ENCODE measurements at regions of chr2 and their contacts with region 1.

Region 1: DNA sequence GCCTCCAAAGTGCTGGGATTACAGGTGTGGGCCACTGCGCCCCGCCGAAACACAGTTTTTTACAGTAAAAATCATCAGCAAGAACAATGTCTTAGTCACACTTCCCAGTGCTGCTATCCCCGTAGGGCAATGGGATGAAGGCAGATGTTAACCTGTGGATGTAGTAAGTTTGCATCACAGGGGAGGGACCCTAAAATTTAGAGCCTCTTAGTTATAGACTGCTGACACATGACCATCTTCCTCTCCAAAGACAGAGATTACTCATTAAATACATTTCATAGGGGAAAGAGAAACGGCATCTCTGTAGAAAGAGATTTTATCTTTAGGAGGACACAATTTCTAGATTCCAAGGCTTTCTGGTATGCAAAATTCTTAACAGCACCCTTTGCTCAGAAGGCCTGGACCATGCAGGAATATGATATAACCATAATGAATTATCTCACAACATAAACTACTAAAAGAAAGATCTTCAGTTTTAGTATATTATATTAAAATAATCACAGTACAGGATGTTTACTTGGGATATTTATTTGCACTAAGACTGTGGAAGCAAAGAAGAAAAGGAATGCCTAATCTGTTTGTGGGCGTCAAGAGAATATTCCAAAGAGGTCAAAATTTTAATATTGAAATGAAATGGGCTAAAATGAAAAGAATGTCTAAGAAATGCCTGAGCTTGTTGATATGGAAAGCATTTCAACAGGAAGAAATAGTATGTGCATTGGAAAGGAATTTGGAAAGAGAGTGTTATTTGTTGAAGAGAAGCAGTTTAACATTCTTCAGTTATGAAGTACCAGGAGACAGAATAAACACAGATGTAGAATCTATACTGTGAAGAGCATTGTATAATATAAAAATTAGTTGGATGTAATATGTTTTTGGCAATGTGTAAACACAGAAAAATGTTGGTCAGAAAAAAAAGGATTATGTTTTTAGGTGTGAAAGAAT is 1228.3 kb upstream of the CHAC2 start:
- DNase-seq: peak; percentile 86
- ATAC-seq: peak; percentile 88
- H3K4me3 ChIP-seq: no peak overlapping the region
- H3K27ac ChIP-seq: peak overlapping the region; percentile 98
- H3K4me1 ChIP-seq: peaks cover 12% of the 10 kb centered on the region
- H3K27me3 ChIP-seq: no peaks in the 10 kb centered on the region
- CTCF ChIP-seq: no peak
- POLR2A ChIP-seq: no peak
- RAD21 ChIP-seq: no peak

Region 2: GRCh38 chr2:51734115-51734514 is 805.2 kb before region 1 on chr2:
- CTCF ChIA-PET with region 1: no interaction called
- POLR2A ChIA-PET with region 1: no interaction called
- dilution Hi-C with region 1: no loop called
- in situ Hi-C with region 1: no loop called
- intact Hi-C with region 1: no loop called
- DNase-seq: peak; percentile 71
- ATAC-seq: peak; percentile 60
- H3K4me3 ChIP-seq: no peak overlapping the region
- H3K27ac ChIP-seq: no peak overlapping the region
- H3K4me1 ChIP-seq: no peaks in the 10 kb centered on the region
- H3K27me3 ChIP-seq: no peaks in the 10 kb centered on the region
- CTCF ChIP-seq: no peak
- POLR2A ChIP-seq: no peak
- RAD21 ChIP-seq: no peak

Region 3: GRCh38 chr2:51995293-51995692 is 544.0 kb before region 1 on chr2:
- CTCF ChIA-PET with region 1: no interaction called
- POLR2A ChIA-PET with region 1: no interaction called
- dilution Hi-C with region 1: no loop called
- in situ Hi-C with region 1: no loop called
- intact Hi-C with region 1: loop called (anchors 5 kb)
- DNase-seq: peak; percentile 89
- ATAC-seq: peak; percentile 75
- H3K4me3 ChIP-seq: no peak overlapping the region
- H3K27ac ChIP-seq: peak overlapping the region; percentile 63; the same call in 1 of the 2 replicates
- H3K4me1 ChIP-seq: peaks cover 6% of the 10 kb centered on the region
- H3K27me3 ChIP-seq: no peaks in the 10 kb centered on the region
- CTCF ChIP-seq: no peak
- POLR2A ChIP-seq: no peak
- RAD21 ChIP-seq: no peak; the same call in 1 of the 2 replicates

Region 4: GRCh38 chr2:52429740-52430139 is 109.6 kb before region 1 on chr2:
- CTCF ChIA-PET with region 1: no interaction called
- POLR2A ChIA-PET with region 1: no interaction called
- dilution Hi-C with region 1: no loop called
- in situ Hi-C with region 1: no loop called
- intact Hi-C with region 1: loop called (anchors 10 kb)
- DNase-seq: peak; percentile 62
- ATAC-seq: peak; percentile 82
- H3K4me3 ChIP-seq: no peak overlapping the region
- H3K27ac ChIP-seq: peak overlapping the region; percentile 52; the same call in 1 of the 2 replicates
- H3K4me1 ChIP-seq: 0 out of 2 replicates have a peak, but pooled peaks cover 1% of the 10 kb centered on the region
- H3K27me3 ChIP-seq: no peaks in the 10 kb centered on the region
- CTCF ChIP-seq: no peak
- POLR2A ChIP-seq: no peak
- RAD21 ChIP-seq: no peak

Region 5: DNA sequence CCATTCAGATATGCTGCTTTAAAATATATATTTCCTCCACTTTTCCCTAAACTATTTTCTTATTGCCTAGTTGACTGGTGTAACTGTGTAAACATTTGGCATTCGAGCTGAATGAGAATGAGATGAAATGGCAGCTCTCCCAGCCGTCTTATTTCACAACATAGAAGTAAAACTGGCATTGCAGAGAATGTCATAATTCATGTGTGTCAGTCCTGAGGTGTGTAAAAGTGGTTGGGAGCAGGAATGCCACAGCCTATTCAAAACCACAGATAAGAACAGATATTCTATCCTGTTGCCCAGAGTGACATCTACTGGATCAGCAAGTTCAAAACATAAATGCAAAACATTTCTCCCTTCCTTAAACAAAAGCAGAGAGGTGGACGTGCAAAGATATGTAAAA is 662.8 kb after region 1 on chr2:
- CTCF ChIA-PET with region 1: no interaction called
- POLR2A ChIA-PET with region 1: no interaction called
- dilution Hi-C with region 1: no loop called
- in situ Hi-C with region 1: no loop called
- intact Hi-C with region 1: loop called (anchors 2 kb)
- DNase-seq: peak; percentile 84
- ATAC-seq: peak; percentile 95
- H3K4me3 ChIP-seq: no peak overlapping the region
- H3K27ac ChIP-seq: no peak overlapping the region
- H3K4me1 ChIP-seq: no peaks in the 10 kb centered on the region
- H3K27me3 ChIP-seq: no peaks in the 10 kb centered on the region
- CTCF ChIP-seq: peak; percentile 62
- POLR2A ChIP-seq: no peak
- RAD21 ChIP-seq: peak; percentile 76

Measured in IMR-90 (cell line).